Natural killer cell (primary cell): ENCODE measurements at regions of chr19 and their contacts with region 1.

Region 1: GRCh38 chr19:1241417-1242095 is at the start of gene ATP5F1D:
- DNase-seq: peak; percentile 88 to 97
- ATAC-seq: peak; percentile 71 to 81 (median 74)
- H3K4me3 ChIP-seq: peak within 1 kb of the TSS; percentile 33
- H3K4me3 Mint-ChIP-seq: peak within 1 kb of the TSS; percentile 95
- H3K27ac ChIP-seq: no peak within 1 kb of the TSS
- H3K27ac Mint-ChIP-seq: peak within 1 kb of the TSS; percentile 86 to 89
- H3K4me1 ChIP-seq: peaks cover 69% of the 10 kb centered on the region
- H3K4me1 Mint-ChIP-seq: peaks cover 21 to 35% of the 10 kb centered on the region in 2 donors
- H3K27me3 ChIP-seq: peaks cover 12% of the 10 kb centered on the region
- H3K27me3 Mint-ChIP-seq: peaks cover 10 to 14% of the 10 kb centered on the region in 2 donors
- CTCF ChIP-seq: no peak
- total RNA-seq, gene ATP5F1D: 88.6 to 119 (median 104) TPM

Region 2: GRCh38 chr19:1266116-1266915 is 24.8 kb after region 1 on chr19:
- intact Hi-C with region 1: loop called (anchors 1 kb)
- DNase-seq: peak; percentile 89 to 91
- ATAC-seq: peak; percentile 41 to 66 (median 53)
- H3K4me3 ChIP-seq: peak overlapping the region; percentile 28
- H3K4me3 Mint-ChIP-seq: peak overlapping the region; percentile 72
- H3K27ac ChIP-seq: peak overlapping the region; percentile 70
- H3K27ac Mint-ChIP-seq: peak overlapping the region; percentile 21 to 97
- H3K4me1 ChIP-seq: peaks cover 83% of the 10 kb centered on the region
- H3K4me1 Mint-ChIP-seq: peaks cover 53 to 67% of the 10 kb centered on the region in 2 donors
- H3K27me3 ChIP-seq: no peaks in the 10 kb centered on the region
- H3K27me3 Mint-ChIP-seq: no peaks in the 10 kb centered on the region
- CTCF ChIP-seq: no peak